ENCODE measurements at regions of chr1 and their contacts with region 1.

Region 1: DNA sequence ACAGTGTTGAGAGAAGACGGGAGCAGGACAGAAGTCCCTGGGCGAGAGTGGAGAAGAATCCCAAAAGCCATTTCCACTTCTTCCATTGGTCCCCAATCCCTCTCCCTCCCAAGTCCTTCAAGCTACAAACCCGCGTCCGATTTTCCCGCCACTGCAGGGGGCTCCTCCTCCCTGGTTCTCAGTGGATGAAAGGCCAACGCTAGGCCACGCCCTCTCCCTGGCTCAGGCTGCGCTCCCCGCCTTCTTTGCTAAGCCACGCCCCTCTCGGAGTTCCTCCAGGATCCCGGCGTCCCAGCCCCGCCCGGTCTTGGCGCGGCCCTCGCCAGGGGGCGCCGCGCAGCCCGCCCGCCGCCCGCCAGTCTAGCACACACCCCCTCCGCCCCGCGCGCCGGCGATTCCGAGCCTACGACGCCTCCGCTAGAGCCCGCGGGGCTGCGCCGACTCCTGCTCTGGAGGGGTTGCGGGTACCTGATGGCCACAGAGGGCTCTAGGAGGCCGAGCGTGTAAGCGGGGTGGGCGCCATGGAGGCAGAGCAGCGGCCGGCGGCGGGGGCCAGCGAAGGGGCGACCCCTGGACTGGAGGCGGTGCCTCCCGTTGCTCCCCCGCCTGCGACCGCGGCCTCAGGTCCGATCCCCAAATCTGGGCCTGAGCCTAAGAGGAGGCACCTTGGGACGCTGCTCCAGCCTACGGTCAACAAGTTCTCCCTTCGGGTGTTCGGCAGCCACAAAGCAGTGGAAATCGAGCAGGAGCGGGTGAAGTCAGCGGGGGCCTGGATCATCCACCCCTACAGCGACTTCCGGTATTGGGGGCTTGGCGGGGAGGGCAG is at the start of gene HCN3:
- DNase-seq: peak; percentile 99
- total RNA-seq, gene HCN3: 2.2 TPM

Region 2: GRCh38 chr1:154463512-154463990 is 813.7 kb before region 1 on chr1:
- intact Hi-C with region 1: no loop called
- DNase-seq: peak; percentile 56

Region 3: GRCh38 chr1:155308493-155309422 is 31.5 kb after region 1 on chr1 and contains the start of gene FDPS:
- intact Hi-C with region 1: loop called (anchors 2 kb)
- DNase-seq: peak; percentile 100
- total RNA-seq, gene FDPS: 83.1 TPM

Region 4: DNA sequence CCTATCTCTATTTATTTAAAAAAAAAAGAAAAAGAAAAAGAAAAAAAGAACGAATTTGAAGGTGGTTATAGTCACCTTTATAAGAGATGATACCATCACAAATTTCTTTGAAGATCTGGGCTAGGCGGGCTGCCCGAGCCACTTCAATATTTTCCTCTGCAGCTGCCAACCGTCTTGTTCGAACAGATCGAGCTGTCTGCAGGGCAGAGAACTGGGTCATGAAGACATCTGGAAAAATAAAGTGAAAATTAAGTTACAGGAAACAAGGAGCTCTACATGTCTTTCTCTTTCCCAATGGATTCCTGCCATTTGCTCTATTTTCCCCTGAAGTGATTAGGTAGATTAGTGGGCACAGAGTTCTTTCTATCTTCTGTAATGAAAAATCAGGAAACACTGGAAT is 75.3 kb after region 1 on chr1:
- intact Hi-C with region 1: no loop called
- DNase-seq: no peak

Region 5: DNA sequence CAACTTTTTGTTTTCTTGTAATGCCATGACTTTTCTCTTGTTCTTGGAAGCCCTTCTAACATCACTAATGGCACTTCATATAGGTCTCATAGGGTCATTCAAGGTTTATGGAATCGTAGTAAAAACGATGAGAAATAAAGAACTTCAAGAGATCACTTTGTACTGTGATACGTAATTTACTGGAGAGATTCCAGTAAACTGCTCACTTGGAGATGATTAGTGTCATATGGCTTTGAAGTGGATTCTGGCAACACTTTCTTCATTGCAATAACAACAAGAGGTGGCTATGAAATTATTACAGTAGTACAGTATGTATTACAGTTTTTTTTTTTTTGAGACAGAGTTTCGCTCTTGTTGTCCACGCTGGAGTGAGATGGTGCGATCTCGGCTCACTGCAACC is 146.8 kb after region 1 on chr1:
- intact Hi-C with region 1: no loop called
- DNase-seq: no peak